ENCODE measurements at regions of chr5 and their contacts with region 1.

Region 1: DNA sequence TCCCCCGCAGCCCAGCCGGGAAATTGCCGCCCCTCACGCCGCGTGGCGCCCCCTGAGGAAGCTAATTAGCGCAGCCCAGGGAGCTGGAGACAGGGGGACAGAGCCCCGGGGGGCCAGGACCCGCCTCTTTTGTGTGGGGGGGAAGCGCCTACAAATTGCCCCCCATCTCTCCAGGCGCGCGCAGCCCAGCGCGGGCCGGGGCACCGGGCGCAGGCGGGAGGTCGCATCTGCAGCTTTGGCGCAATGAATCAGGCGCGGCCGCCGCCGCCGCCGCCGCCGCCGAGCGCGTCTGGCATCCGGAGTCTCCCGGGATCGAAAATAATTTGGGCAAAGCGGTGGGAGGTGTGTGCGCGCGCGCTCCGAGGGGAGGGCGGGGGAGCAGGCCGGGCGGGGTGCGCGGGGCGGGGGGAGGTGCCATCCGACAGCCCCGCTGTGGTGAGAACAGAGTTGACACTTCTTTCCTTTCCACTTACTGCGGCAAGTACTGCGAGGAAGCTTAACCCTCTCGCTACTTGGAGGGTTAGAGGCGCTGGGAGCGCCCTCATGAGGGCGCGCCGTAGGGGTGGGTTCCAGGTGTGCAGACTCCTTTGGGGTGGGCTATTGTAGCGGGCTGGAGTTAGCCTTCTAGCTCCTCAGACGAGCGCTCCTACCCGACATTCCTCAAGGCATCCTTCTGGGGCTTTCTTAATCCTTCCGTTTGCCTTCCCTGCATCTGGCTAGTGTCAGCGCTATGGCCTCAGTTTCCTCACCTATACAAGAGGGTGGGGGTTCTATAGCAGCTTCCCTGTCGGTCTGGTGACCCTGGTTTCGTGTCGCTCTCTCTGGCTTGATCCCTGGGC is 63.1 kb downstream of the CXXC5 start:
- DNase-seq: peak; percentile 31 to 46
- ATAC-seq: peak; percentile 37 to 65; a peak in 5 of 6 replicates
- H3K4me3 ChIP-seq: peak overlapping the region; percentile 88
- H3K27ac ChIP-seq: peak overlapping the region; percentile 65 to 87
- H3K4me1 ChIP-seq: peaks cover 19% of the 10 kb centered on the region; the same call in 2 of the 3 replicates
- CTCF ChIP-seq: no peak
- EP300 ChIP-seq: no peak
- POLR2A ChIP-seq: no peak
- RAD21 ChIP-seq: peak; percentile 24 to 39; a peak in 2 of 5 replicates

Region 2: GRCh38 chr5:139430015-139430414 is 281.3 kb before region 1 on chr5:
- CTCF ChIA-PET with region 1: no interaction called
- POLR2A ChIA-PET with region 1: no interaction called
- DNase-seq: no peak
- ATAC-seq: no peak
- H3K4me3 ChIP-seq: no peak overlapping the region
- H3K27ac ChIP-seq: no peak overlapping the region
- H3K4me1 ChIP-seq: no peaks in the 10 kb centered on the region
- CTCF ChIP-seq: no peak
- EP300 ChIP-seq: no peak
- POLR2A ChIP-seq: no peak
- RAD21 ChIP-seq: no peak

Region 3: DNA sequence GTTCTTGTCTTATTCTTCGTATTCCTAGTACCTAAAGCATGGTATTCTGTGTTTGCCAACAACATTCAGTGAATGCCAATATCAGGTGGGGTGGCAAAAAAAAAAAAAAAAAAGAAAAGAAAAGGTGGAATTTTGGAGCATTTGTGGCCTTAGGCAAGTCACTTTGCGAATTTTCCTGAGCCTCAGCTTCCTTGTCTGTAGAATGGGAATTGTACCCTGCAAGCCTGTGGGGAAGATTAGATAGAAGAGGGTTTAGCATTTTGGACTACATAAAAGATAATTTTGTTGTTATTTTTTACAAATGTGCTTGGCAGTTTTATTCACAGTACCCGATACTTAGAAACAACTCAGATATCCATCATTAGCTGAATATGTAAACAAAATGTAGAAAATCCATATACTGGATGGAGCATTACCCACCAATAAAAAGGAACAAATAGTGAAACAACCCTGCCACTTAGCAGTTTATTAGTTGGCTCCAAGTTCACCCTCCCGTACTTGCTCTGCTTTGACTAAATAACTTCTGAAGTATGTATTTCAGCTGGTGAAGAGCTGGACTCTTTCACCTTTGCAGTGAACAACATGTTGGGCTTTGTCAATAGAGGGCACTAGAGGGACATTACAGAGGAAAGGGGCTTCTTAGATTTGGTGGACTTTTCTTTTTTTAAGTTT is 136.5 kb before region 1 on chr5:
- CTCF ChIA-PET with region 1: no interaction called
- POLR2A ChIA-PET with region 1: no interaction called
- DNase-seq: peak; percentile 44 to 46
- ATAC-seq: peak; percentile 80 to 89; a peak in 5 of 6 replicates
- H3K4me3 ChIP-seq: no peak overlapping the region
- H3K27ac ChIP-seq: no peak overlapping the region
- H3K4me1 ChIP-seq: peaks cover 29% of the 10 kb centered on the region; the same call in 2 of the 3 replicates
- CTCF ChIP-seq: peak; percentile 74
- EP300 ChIP-seq: no peak
- POLR2A ChIP-seq: no peak
- RAD21 ChIP-seq: peak; percentile 64 to 71

Region 4: GRCh38 chr5:139725073-139725830 is 14.0 kb after region 1 on chr5:
- CTCF ChIA-PET with region 1: interaction called, 11 read pairs
- POLR2A ChIA-PET with region 1: no interaction called
- DNase-seq: peak in 1 of 2 experiments; percentile 73
- ATAC-seq: peak; percentile 94 to 97
- H3K4me3 ChIP-seq: no peak overlapping the region
- H3K27ac ChIP-seq: peak overlapping the region; percentile 52 to 78; a peak in 5 of 6 replicates
- H3K4me1 ChIP-seq: peaks cover 16% of the 10 kb centered on the region
- CTCF ChIP-seq: no peak
- EP300 ChIP-seq: no peak
- POLR2A ChIP-seq: no peak
- RAD21 ChIP-seq: no peak

Region 5: GRCh38 chr5:139740138-139740991 is 29.1 kb after region 1 on chr5:
- CTCF ChIA-PET with region 1: no interaction called
- POLR2A ChIA-PET with region 1: no interaction called
- DNase-seq: no peak
- ATAC-seq: no peak
- H3K4me3 ChIP-seq: no peak overlapping the region
- H3K27ac ChIP-seq: peak overlapping the region in 1 of 2 experiments; percentile 80; a peak in 3 of 6 replicates
- H3K4me1 ChIP-seq: peaks cover 30% of the 10 kb centered on the region
- CTCF ChIP-seq: no peak
- EP300 ChIP-seq: no peak
- POLR2A ChIP-seq: no peak
- RAD21 ChIP-seq: no peak

Region 6: GRCh38 chr5:140011297-140011802 is 300.1 kb after region 1 on chr5:
- CTCF ChIA-PET with region 1: no interaction called
- POLR2A ChIA-PET with region 1: no interaction called
- DNase-seq: peak in 1 of 2 experiments; percentile 28
- ATAC-seq: peak; percentile 50 to 64
- H3K4me3 ChIP-seq: no peak overlapping the region
- H3K27ac ChIP-seq: no peak overlapping the region
- H3K4me1 ChIP-seq: no peaks in the 10 kb centered on the region
- CTCF ChIP-seq: no peak
- EP300 ChIP-seq: no peak
- POLR2A ChIP-seq: no peak
- RAD21 ChIP-seq: no peak

Measured in A549 (cell line).